ENCODE measurements at regions of chr16 and their contacts with region 1.

Region 1: GRCh38 chr16:22190776-22191531 is 15.1 kb upstream of the EEF2K start:
- DNase-seq: peak; percentile 98
- ATAC-seq: peak; percentile 67
- H3K4me3 ChIP-seq: peak overlapping the region; percentile 81
- H3K27ac ChIP-seq: peak overlapping the region; percentile 90
- H3K4me1 ChIP-seq: peaks cover 43% of the 10 kb centered on the region
- H3K27me3 ChIP-seq: no peaks in the 10 kb centered on the region
- CTCF ChIP-seq: no peak
- EP300 ChIP-seq: no peak
- POLR2A ChIP-seq: peak; percentile 85
- RAD21 ChIP-seq: no peak

Region 2: GRCh38 chr16:21656795-21657768 is 533.9 kb before region 1 on chr16:
- CTCF ChIA-PET with region 1: interaction called, 12 read pairs
- POLR2A ChIA-PET with region 1: no interaction called
- RAD21 ChIA-PET with region 1: interaction called, 3 read pairs
- SMC1A ChIA-PET with region 1: no interaction called
- in situ Hi-C with region 1: no loop called
- intact Hi-C with region 1: no loop called
- DNase-seq: peak; percentile 32
- ATAC-seq: peak; percentile 84
- H3K4me3 ChIP-seq: peak overlapping the region; percentile 9; the same call in 1 of the 2 replicates
- H3K27ac ChIP-seq: peak overlapping the region; percentile 38
- H3K4me1 ChIP-seq: peaks cover 29% of the 10 kb centered on the region
- H3K27me3 ChIP-seq: no peaks in the 10 kb centered on the region
- CTCF ChIP-seq: peak; percentile 67 to 81 (median 79)
- EP300 ChIP-seq: peak; percentile 61 to 74; a peak in 3 of 4 replicates
- POLR2A ChIP-seq: no peak
- RAD21 ChIP-seq: peak; percentile 83

Region 3: GRCh38 chr16:22007509-22008214 is 183.3 kb before region 1 on chr16 and contains the start of gene MOSMO:
- CTCF ChIA-PET with region 1: interaction called, 101 read pairs
- POLR2A ChIA-PET with region 1: interaction called, 4 read pairs
- RAD21 ChIA-PET with region 1: interaction called, 51 read pairs
- SMC1A ChIA-PET with region 1: interaction called, 61 read pairs
- in situ Hi-C with region 1: no loop called
- intact Hi-C with region 1: no loop called
- DNase-seq: no peak
- ATAC-seq: peak; percentile 88
- H3K4me3 ChIP-seq: peak within 1 kb of the TSS; percentile 98
- H3K27ac ChIP-seq: peak within 1 kb of the TSS; percentile 54
- H3K4me1 ChIP-seq: peaks cover 15% of the 10 kb centered on the region
- H3K27me3 ChIP-seq: no peaks in the 10 kb centered on the region
- CTCF ChIP-seq: no peak
- EP300 ChIP-seq: no peak
- POLR2A ChIP-seq: peak; percentile 75
- RAD21 ChIP-seq: no peak
- polyA plus RNA-seq, gene MOSMO: 2.2 to 7.3 TPM

Region 4: DNA sequence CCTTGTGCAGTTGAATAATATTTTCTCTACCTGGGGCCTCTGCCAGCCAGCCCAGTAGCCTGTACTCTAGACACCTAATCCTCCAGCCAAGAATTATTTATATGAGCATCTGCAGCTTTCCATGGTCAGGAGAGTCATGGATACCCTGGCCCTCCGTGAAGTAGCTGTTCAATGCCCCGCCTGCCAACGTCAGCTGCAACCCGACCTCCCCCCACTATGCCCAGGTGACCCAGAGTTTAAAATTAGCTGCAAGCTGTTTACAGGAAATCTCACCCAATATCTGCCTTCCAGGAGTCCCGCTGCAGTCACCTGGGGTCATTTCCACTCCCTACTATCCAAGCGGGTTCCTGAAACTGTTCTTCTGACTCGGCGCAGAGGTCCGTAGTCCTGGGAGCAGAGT is 16.3 kb before region 1 on chr16:
- CTCF ChIA-PET with region 1: interaction called, 10 read pairs
- POLR2A ChIA-PET with region 1: no interaction called
- RAD21 ChIA-PET with region 1: interaction called, 4 read pairs
- SMC1A ChIA-PET with region 1: interaction called, 3 read pairs
- in situ Hi-C with region 1: no loop called
- intact Hi-C with region 1: no loop called
- DNase-seq: no peak
- ATAC-seq: no peak
- H3K4me3 ChIP-seq: no peak overlapping the region
- H3K27ac ChIP-seq: no peak overlapping the region
- H3K4me1 ChIP-seq: no peaks in the 10 kb centered on the region
- H3K27me3 ChIP-seq: no peaks in the 10 kb centered on the region; a peak in 1 of 4 replicates
- CTCF ChIP-seq: no peak
- EP300 ChIP-seq: no peak
- POLR2A ChIP-seq: no peak
- RAD21 ChIP-seq: no peak

Region 5: DNA sequence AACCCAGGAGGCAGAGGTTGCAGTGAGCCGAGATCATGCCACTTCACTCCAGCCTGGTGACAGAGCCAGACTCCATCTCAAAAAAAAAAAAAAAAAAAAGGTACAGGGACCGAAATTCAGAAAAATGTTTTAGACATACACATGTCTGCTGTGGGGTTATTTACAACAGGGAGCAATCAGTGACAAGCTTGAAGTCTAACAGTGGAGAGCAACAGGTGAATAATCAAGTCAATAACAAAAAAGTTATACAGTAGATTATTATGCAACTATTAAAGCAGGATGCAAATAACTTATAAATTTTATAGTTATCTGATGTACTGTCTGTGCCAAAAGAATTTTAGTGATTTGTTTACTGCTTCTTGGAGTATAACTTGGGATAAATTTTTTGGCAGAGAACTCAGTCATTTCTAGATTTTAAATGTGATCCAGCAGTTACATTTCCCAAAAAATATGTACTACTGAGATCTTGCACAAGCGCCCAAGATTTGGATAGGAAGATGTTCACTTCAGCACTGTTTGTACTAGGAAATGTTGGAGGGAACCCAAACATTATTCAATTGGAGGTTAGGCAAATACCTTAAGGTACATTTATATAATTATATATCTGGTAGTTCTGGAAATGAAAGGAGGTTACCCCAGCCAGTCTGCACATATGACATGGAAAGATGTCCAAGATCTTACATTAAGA is 49.2 kb after region 1 on chr16:
- CTCF ChIA-PET with region 1: interaction called, 3 read pairs
- POLR2A ChIA-PET with region 1: no interaction called
- RAD21 ChIA-PET with region 1: no interaction called
- SMC1A ChIA-PET with region 1: no interaction called
- in situ Hi-C with region 1: no loop called
- intact Hi-C with region 1: loop called (anchors 2 kb)
- DNase-seq: no peak
- ATAC-seq: no peak
- H3K4me3 ChIP-seq: no peak overlapping the region
- H3K27ac ChIP-seq: no peak overlapping the region
- H3K4me1 ChIP-seq: peaks cover 11% of the 10 kb centered on the region
- H3K27me3 ChIP-seq: no peaks in the 10 kb centered on the region
- CTCF ChIP-seq: no peak
- EP300 ChIP-seq: no peak
- POLR2A ChIP-seq: no peak
- RAD21 ChIP-seq: no peak

Region 6: DNA sequence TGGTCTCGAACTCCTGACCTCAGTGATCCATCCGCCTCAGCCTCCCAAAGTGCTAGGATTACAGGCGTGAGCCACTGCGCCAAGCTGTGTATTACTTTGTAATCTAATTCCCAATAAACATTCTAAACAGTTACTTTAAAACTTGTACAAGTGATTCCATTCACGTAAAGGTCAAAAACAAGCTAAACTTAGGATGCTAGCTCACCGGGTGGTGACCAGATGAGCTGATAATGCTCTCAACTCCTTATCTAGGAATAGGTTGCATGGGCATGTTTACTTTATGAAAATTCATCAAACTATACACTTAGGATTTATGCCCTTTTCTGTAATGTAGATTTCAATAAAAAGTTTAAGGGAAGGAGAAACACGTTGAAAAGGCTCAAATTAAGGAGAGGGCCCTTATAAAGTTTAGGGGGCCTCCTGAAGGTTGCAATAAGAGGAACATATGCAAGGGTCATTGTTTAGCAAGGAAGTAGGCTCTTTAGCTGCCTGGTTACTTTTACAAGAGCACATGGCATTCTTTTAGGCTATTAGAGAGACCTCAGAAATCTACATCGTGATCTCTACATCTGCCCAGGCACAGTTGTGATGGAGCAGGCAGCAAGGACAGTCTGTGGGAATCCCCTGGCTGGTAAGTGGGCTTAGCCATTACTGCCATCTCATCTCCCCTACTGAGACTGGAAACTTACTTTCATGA is 170.2 kb after region 1 on chr16:
- CTCF ChIA-PET with region 1: no interaction called
- POLR2A ChIA-PET with region 1: no interaction called
- RAD21 ChIA-PET with region 1: no interaction called
- SMC1A ChIA-PET with region 1: no interaction called
- in situ Hi-C with region 1: no loop called
- intact Hi-C with region 1: no loop called
- DNase-seq: no peak
- ATAC-seq: peak; percentile 54
- H3K4me3 ChIP-seq: no peak overlapping the region
- H3K27ac ChIP-seq: peak overlapping the region; percentile 16
- H3K4me1 ChIP-seq: peaks cover 19% of the 10 kb centered on the region
- H3K27me3 ChIP-seq: no peaks in the 10 kb centered on the region
- CTCF ChIP-seq: no peak
- EP300 ChIP-seq: no peak
- POLR2A ChIP-seq: no peak
- RAD21 ChIP-seq: no peak